Activated CD4-positive, alpha-beta memory T cell treated with anti-CD3 and anti-CD28 coated beads, Interleukin-2, amount 10 ng/mL, durations not matched to agents 7 days and 5 days (primary cell): ENCODE measurements at regions of chr6 and their contacts with region 1.

Region 1: DNA sequence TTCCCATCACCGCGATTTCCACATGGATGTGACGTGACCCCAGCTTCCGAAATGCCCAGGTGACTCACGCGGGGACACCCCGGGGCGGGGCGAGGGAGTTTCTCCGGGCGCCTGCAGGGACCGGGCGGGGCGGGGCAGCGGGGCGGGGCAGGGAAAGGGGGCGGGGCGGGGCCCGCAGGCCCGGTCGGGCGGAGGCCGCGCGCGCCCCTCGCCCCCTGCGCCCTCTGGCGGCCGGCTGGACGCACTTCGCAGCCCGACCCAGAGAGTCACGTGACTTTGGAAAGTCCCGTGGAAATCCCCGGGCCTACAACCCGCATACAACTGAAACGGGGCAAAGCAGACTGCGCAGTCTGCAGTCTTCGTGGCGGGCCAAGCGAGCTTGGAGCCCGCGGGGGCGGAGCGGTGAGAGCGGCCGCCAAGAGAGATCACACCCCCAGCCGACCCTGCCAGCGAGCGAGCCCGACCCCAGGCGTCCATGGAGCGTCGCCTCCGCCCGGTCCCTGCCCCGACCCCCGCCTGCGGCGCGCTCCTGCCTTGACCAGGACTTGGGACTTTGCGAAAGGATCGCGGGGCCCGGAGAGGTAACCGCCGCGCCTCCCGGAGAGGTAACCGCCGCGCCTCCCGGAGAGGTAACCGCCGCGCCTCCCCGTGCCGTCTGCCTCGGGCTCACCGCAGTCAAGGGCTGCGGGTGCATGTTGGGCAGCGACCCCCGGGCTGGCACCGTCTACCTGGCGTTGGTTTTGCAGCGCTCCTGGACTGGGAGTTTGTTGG is at the start of gene TNFAIP3:
- DNase-seq: peak; percentile 95
- H3K4me3 Mint-ChIP-seq: peak within 1 kb of the TSS; percentile 87
- H3K27ac Mint-ChIP-seq: peak within 1 kb of the TSS; percentile 86
- H3K4me1 Mint-ChIP-seq: peaks cover 51% of the 10 kb centered on the region
- H3K27me3 Mint-ChIP-seq: no peaks in the 10 kb centered on the region
- total RNA-seq, gene TNFAIP3: 143 to 144 TPM

Region 2: GRCh38 chr6:137697267-137697938 is 169.7 kb before region 1 on chr6:
- CTCF ChIA-PET with region 1: interaction called, 24 read pairs
- POLR2A ChIA-PET with region 1: interaction called, 12 read pairs
- DNase-seq: no peak
- H3K4me3 Mint-ChIP-seq: no peak overlapping the region
- H3K27ac Mint-ChIP-seq: peak overlapping the region; percentile 52
- H3K4me1 Mint-ChIP-seq: peaks cover 53% of the 10 kb centered on the region
- H3K27me3 Mint-ChIP-seq: no peaks in the 10 kb centered on the region

Region 3: DNA sequence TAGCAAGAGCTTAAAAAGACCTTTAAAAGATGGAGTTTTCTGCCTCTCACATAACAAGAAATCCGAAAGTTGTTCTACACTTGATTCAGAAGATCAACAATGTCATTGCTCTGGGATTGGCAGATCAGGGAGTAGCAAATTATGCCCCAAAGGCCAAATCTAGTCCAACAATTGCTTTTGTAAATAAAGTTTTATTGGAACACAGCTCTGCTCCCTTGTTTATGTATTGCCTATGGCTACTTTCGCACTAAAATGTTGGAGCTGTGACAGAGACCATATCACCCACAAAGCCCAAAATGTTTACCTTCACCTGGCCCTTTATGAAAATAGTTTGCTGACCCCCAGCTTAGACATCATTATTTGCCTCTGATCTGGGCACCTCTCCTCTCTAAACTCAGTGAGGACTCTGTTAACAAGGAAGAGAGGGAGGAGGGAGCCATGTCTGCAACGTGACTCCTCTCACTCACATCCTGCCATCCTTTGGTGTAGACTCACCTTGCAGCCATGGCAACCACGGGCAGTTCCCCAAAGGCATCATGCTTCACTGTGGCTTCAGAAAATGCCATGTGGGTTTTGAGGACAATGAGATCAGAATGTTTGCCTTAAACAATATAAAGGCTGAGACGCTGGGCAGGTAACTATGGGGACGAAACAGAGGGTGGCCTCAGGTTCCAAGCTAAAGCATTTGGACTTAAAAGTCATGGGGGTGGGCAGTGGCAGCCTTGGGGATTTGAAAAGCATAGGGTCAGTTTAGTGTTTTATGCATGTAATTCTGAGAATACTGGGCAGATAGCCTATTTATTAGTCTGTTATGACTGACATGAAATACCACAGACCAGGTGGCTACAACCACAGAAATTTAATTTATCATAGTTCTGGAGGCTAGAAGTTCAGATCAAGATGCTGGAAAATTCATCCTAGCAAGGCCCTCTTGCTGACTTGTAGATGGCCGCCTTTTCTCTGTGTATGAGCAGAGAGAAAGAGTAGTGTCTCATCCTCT is 149.7 kb before region 1 on chr6:
- CTCF ChIA-PET with region 1: interaction called, 20 read pairs
- POLR2A ChIA-PET with region 1: interaction called, 42 read pairs
- DNase-seq: peak; percentile 86
- H3K4me3 Mint-ChIP-seq: no peak overlapping the region
- H3K27ac Mint-ChIP-seq: peak overlapping the region; percentile 71
- H3K4me1 Mint-ChIP-seq: peaks cover 50% of the 10 kb centered on the region
- H3K27me3 Mint-ChIP-seq: no peaks in the 10 kb centered on the region

Region 4: GRCh38 chr6:137799950-137800568 is 67.0 kb before region 1 on chr6:
- CTCF ChIA-PET with region 1: interaction called, 28 read pairs
- POLR2A ChIA-PET with region 1: interaction called, 13 read pairs
- DNase-seq: peak; percentile 62
- H3K4me3 Mint-ChIP-seq: no peak overlapping the region
- H3K27ac Mint-ChIP-seq: peak overlapping the region; percentile 13
- H3K4me1 Mint-ChIP-seq: peaks cover 45% of the 10 kb centered on the region
- H3K27me3 Mint-ChIP-seq: no peaks in the 10 kb centered on the region

Region 5: GRCh38 chr6:137823826-137824555 is 43.1 kb before region 1 on chr6:
- CTCF ChIA-PET with region 1: interaction called, 8 read pairs
- POLR2A ChIA-PET with region 1: interaction called, 18 read pairs
- DNase-seq: peak; percentile 69
- H3K4me3 Mint-ChIP-seq: peak overlapping the region; percentile 65
- H3K27ac Mint-ChIP-seq: peak overlapping the region; percentile 92
- H3K4me1 Mint-ChIP-seq: peaks cover 77% of the 10 kb centered on the region
- H3K27me3 Mint-ChIP-seq: no peaks in the 10 kb centered on the region

Region 6: DNA sequence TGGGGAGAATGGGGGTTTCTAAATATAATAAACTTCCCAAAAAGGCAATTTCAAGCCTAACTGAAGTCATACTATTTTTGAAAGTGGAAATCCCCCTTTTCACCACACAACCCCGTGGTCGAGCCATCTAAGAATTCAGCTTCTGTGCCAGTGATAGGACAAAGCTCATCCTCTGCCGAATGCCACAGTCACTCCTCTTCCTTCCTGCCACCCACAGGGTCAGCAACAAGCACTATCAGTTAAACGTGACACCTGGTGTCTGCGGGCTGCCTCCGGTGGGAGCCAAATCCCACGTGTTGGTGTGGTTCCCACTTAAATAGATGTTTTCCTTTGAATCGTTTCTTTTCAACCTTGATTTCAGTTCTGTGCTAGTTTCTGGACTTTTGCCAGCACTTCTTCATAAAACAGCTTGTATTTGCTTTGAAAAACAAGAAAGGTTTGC is 60.7 kb after region 1 on chr6:
- CTCF ChIA-PET with region 1: interaction called, 11 read pairs
- POLR2A ChIA-PET with region 1: interaction called, 28 read pairs
- DNase-seq: peak; percentile 80
- H3K4me3 Mint-ChIP-seq: peak overlapping the region; percentile 2
- H3K27ac Mint-ChIP-seq: peak overlapping the region; percentile 67
- H3K4me1 Mint-ChIP-seq: peaks cover 33% of the 10 kb centered on the region
- H3K27me3 Mint-ChIP-seq: no peaks in the 10 kb centered on the region

Region 7: GRCh38 chr6:137975188-137975940 is 108.3 kb after region 1 on chr6:
- CTCF ChIA-PET with region 1: interaction called, 31 read pairs
- POLR2A ChIA-PET with region 1: interaction called, 23 read pairs
- DNase-seq: peak; percentile 35
- H3K4me3 Mint-ChIP-seq: peak overlapping the region; percentile 66
- H3K27ac Mint-ChIP-seq: peak overlapping the region; percentile 91
- H3K4me1 Mint-ChIP-seq: peaks cover 53% of the 10 kb centered on the region
- H3K27me3 Mint-ChIP-seq: no peaks in the 10 kb centered on the region